ENCODE measurements at regions of chr5 and their contacts with region 1.

Region 1: GRCh38 chr5:107011605-107012004 is 659.1 kb downstream of the EFNA5 start:
- DNase-seq: no peak
- H3K4me3 ChIP-seq: no peak overlapping the region
- H3K27ac ChIP-seq: no peak overlapping the region
- H3K4me1 ChIP-seq: no peaks in the 10 kb centered on the region
- H3K27me3 ChIP-seq: no peaks in the 10 kb centered on the region
- CTCF ChIP-seq: no peak
- POLR2A ChIP-seq: no peak

Region 2: DNA sequence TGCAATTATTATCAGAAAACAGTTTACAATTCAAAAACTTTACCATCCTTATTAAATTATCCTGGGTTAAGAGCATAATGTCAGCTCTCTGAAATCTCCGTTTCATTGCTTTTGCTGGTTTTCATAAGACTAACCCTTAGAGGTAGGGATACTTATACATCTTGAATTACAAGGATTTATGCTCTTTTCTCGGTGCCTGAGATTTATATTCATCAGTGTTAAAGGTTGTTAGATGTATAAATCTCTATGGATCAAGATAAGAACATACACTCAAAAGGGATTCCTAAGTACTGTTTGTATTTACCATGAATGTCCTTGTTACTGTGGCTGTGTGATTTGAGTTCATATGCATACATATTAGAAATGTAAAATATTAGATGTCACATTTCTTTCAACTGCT is 25.6 kb before region 1 on chr5:
- CTCF ChIA-PET with region 1: no interaction called
- POLR2A ChIA-PET with region 1: no interaction called
- dilution Hi-C with region 1: no loop called
- intact Hi-C with region 1: loop called (anchors 1 kb)
- DNase-seq: no peak
- H3K4me3 ChIP-seq: no peak overlapping the region
- H3K27ac ChIP-seq: no peak overlapping the region
- H3K4me1 ChIP-seq: no peaks in the 10 kb centered on the region
- H3K27me3 ChIP-seq: no peaks in the 10 kb centered on the region
- CTCF ChIP-seq: no peak
- POLR2A ChIP-seq: no peak

Measured in endothelial cell of umbilical vein (primary cell).